ENCODE measurements at regions of chr1 and their contacts with region 1.

Region 1: DNA sequence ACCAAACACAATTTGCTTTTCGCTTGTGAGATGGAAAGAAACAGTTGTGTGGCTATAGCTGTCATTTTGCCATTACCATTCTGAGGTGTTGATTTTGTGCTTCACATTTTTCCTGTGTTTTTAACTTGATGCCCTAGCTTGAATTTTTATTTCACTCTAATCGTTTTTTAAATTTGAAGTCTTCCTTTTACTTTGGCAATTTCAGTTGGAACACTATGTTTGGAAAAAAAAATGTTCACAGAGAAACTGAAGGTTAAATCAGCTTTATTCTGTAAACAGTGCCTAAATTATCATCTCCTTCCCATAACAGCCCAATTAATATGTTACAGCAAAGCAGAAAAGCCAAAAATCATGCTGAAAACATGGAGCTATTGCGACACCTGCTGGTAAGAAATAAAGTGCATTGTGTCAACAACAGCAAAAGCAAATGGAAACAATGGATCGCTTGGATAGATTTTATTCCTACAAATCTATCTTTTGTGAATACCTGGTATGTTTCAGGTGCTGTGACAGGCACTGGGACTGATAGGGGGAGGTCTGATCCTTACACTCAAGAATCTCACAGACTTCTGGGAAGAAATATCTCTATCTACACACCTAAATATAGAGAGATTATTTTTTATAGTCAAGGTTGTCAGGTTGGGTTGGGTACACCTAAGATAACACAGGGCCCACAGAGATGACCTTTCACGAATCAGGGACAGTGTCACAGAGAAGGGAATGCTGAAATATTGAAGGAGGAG is 16.2 kb upstream of the ERICH3 start:
- DNase-seq: peak; percentile 32
- ATAC-seq: peak; percentile 71
- H3K4me3 ChIP-seq: no peak overlapping the region
- H3K27ac ChIP-seq: no peak overlapping the region
- H3K4me1 ChIP-seq: no peaks in the 10 kb centered on the region
- H3K27me3 ChIP-seq: no peaks in the 10 kb centered on the region
- CTCF ChIP-seq: peak; percentile 45 to 92 (median 70); a peak in 5 of 6 replicates
- POLR2A ChIP-seq: no peak
- RAD21 ChIP-seq: peak; percentile 77

Region 2: DNA sequence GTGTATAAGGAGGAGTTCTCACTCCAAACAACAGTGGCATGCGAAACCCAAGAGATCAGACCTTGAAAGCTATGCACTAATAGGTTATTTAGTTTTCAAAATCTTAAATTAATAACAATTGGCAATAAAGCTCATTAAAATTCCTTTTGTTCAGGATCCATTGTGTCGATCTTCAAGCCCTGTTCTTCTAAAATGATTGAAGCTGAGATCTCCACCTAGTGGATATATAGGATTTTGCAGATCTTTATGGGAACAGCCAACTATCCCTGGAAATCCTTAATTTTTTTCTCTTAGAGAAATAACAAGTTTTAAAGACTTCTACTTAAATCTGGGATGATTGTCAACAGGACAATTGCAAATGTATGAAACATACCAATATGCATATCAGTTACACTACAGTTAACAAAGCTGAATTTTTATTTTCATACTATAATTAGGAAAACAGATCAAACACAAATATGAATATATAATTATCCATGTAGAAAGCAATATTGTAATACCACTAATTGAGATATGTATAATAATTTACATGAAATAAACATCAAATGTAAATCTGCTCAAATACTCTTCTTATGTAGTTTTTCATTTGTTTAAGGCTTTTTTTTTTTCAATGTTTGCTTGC is 220.7 kb before region 1 on chr1:
- CTCF ChIA-PET with region 1: interaction called, 4 read pairs
- POLR2A ChIA-PET with region 1: no interaction called
- RAD21 ChIA-PET with region 1: no interaction called
- intact Hi-C with region 1: loop called (anchors 5 kb)
- DNase-seq: peak; percentile 18
- ATAC-seq: no peak
- H3K4me3 ChIP-seq: no peak overlapping the region
- H3K27ac ChIP-seq: no peak overlapping the region
- H3K4me1 ChIP-seq: no peaks in the 10 kb centered on the region
- H3K27me3 ChIP-seq: peaks cover 17% of the 10 kb centered on the region
- CTCF ChIP-seq: peak in 2 of 3 experiments; percentile 50 to 70; a peak in 4 of 6 replicates
- POLR2A ChIP-seq: no peak
- RAD21 ChIP-seq: peak; percentile 53

Region 3: GRCh38 chr1:74504125-74504932 is 185.5 kb before region 1 on chr1:
- CTCF ChIA-PET with region 1: interaction called, 6 read pairs
- POLR2A ChIA-PET with region 1: no interaction called
- RAD21 ChIA-PET with region 1: no interaction called
- intact Hi-C with region 1: loop called (anchors 10 kb)
- DNase-seq: peak; percentile 19
- ATAC-seq: peak; percentile 99
- H3K4me3 ChIP-seq: no peak overlapping the region
- H3K27ac ChIP-seq: no peak overlapping the region
- H3K4me1 ChIP-seq: no peaks in the 10 kb centered on the region
- H3K27me3 ChIP-seq: peaks cover 31% of the 10 kb centered on the region; the same call in 1 of the 2 replicates
- CTCF ChIP-seq: peak; percentile 23 to 86 (median 82); a peak in 5 of 6 replicates
- POLR2A ChIP-seq: no peak
- RAD21 ChIP-seq: peak; percentile 52

Region 4: GRCh38 chr1:74674278-74675048 is 15.3 kb before region 1 on chr1:
- CTCF ChIA-PET with region 1: no interaction called
- POLR2A ChIA-PET with region 1: no interaction called
- RAD21 ChIA-PET with region 1: no interaction called
- intact Hi-C with region 1: no loop called
- DNase-seq: no peak
- ATAC-seq: no peak
- H3K4me3 ChIP-seq: no peak overlapping the region
- H3K27ac ChIP-seq: no peak overlapping the region
- H3K4me1 ChIP-seq: no peaks in the 10 kb centered on the region
- H3K27me3 ChIP-seq: peaks cover 15% of the 10 kb centered on the region
- CTCF ChIP-seq: no peak
- POLR2A ChIP-seq: no peak
- RAD21 ChIP-seq: no peak

Region 5: GRCh38 chr1:74824497-74825107 is 134.8 kb after region 1 on chr1:
- CTCF ChIA-PET with region 1: no interaction called
- POLR2A ChIA-PET with region 1: no interaction called
- RAD21 ChIA-PET with region 1: no interaction called
- intact Hi-C with region 1: no loop called
- DNase-seq: no peak
- ATAC-seq: no peak
- H3K4me3 ChIP-seq: no peak overlapping the region
- H3K27ac ChIP-seq: no peak overlapping the region
- H3K4me1 ChIP-seq: no peaks in the 10 kb centered on the region
- H3K27me3 ChIP-seq: peaks cover 39% of the 10 kb centered on the region
- CTCF ChIP-seq: no peak
- POLR2A ChIP-seq: no peak
- RAD21 ChIP-seq: no peak

Measured in HCT116 (cell line).